CD8-positive, alpha-beta memory T cell (primary cell): ENCODE measurements at regions of chr5 and their contacts with region 1.

Region 1: DNA sequence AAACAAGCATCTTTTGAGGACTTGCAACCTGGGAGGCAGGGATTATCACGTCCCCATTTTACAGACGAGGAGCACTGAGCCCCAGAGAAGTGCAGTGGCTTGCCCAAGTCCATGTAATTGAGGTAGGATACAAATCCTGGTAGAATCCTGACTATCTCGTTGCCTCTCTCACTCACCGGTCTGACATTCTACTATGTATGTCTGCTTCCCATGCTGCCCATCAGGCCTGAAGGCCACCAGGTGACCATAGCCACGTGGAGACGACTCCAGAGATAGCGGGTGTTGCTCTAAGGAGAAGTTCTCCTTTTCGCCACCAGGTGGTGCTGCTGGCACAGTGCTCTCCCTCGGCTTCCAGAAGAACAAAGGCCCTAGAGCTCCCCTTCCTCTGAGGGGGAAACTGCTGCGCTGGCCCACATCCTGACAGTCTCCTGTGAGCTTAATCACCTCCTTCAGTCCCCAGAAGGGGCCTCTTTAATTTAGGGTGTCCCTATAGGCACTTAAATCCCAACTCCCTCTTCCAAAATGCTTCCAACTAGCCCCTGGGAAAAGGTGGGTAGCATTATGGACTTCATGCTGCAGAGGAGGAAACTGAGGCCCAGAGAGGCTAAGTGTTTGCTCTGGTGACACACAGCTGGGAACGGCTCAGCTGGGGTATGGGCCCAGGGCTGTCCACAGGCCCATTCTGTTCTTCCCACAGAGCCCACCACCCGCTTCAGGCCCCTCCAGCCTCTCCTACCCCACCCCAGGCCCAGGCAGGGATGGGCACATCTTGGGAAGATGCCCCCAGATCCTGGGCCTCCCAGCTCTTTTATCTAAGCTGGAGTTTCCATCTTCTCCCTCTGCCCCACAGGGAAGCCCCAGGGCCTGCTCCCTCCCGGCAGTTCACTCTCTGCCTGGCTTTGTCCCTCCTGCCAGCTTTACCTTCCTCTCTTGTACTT is 6.4 kb downstream of the SLC34A1 start:
- DNase-seq: peak; percentile 76 to 90 (median 83)
- H3K4me3 ChIP-seq: no peak overlapping the region
- H3K4me3 Mint-ChIP-seq: peak overlapping the region; percentile 41 to 90 (median 65)
- H3K27ac ChIP-seq: peak overlapping the region; percentile 49
- H3K27ac Mint-ChIP-seq: peak overlapping the region; percentile 75 to 99 (median 93)
- H3K4me1 ChIP-seq: peaks cover 39% of the 10 kb centered on the region
- H3K4me1 Mint-ChIP-seq: peaks cover 35 to 39% (median 36%) of the 10 kb centered on the region in 3 donors
- H3K27me3 ChIP-seq: no peaks in the 10 kb centered on the region
- H3K27me3 Mint-ChIP-seq: no peaks in the 10 kb centered on the region

Region 2: DNA sequence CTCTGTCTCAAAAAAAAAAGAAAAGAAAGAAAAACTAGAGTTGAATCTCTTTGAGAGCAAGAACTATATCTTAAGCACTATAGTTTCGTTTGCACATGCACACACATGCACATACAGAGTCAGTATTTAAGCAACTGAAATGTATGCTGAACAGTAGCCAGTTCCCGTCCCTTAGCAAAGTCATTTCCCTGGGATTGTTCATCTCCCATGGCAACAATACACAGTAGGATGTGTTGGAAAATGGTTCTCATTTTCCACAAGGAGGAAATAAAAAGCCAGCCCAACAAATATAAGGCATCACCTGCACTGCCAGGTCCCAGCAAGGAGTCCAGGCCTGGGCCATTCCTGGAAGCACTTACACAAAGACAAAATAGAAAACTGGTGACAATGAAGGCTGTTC is 372.3 kb before region 1 on chr5:
- CTCF ChIA-PET with region 1: no interaction called
- POLR2A ChIA-PET with region 1: no interaction called
- DNase-seq: no peak
- H3K4me3 ChIP-seq: no peak overlapping the region
- H3K4me3 Mint-ChIP-seq: no peak overlapping the region
- H3K27ac ChIP-seq: no peak overlapping the region
- H3K27ac Mint-ChIP-seq: peak overlapping the region in 1 of 8 donors; percentile 29
- H3K4me1 ChIP-seq: peaks cover 12% of the 10 kb centered on the region
- H3K4me1 Mint-ChIP-seq: peaks cover 15 to 21% (median 20%) of the 10 kb centered on the region in 3 donors
- H3K27me3 ChIP-seq: no peaks in the 10 kb centered on the region
- H3K27me3 Mint-ChIP-seq: peaks cover 0 to 2% of the 10 kb centered on the region in 2 donors

Region 3: GRCh38 chr5:177241768-177242167 is 148.9 kb before region 1 on chr5:
- CTCF ChIA-PET with region 1: no interaction called
- POLR2A ChIA-PET with region 1: no interaction called
- DNase-seq: no peak
- H3K4me3 ChIP-seq: no peak overlapping the region
- H3K4me3 Mint-ChIP-seq: no peak overlapping the region
- H3K27ac ChIP-seq: no peak overlapping the region
- H3K27ac Mint-ChIP-seq: peak overlapping the region in 3 of 8 donors; percentile 36 to 66 (median 58)
- H3K4me1 ChIP-seq: no peaks in the 10 kb centered on the region
- H3K4me1 Mint-ChIP-seq: peaks cover 3 to 5% (median 4%) of the 10 kb centered on the region in 3 donors
- H3K27me3 ChIP-seq: no peaks in the 10 kb centered on the region
- H3K27me3 Mint-ChIP-seq: no peaks in the 10 kb centered on the region

Region 4: DNA sequence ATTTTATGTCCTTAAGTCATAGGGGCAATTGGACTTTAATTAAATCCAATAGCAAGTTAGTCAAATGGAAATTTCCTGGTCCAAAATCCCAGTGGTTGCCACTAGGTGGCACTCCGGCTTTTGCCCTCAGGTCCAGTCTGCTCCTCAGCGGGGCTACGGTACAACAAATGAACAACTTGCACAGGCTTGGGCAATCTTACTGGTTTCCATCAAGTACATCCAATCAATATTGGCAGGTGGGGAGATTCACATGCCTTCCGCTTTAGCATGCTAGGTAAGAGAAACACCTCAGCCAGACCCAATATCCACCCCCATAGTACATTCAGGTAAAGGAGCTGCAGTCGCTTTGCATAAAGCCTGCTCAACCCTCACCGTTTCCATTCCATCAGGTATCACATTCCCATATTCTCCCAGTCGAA is 72.7 kb before region 1 on chr5:
- CTCF ChIA-PET with region 1: interaction called, 19 read pairs
- POLR2A ChIA-PET with region 1: no interaction called
- DNase-seq: peak; percentile 55 to 80 (median 63)
- H3K4me3 ChIP-seq: no peak overlapping the region
- H3K4me3 Mint-ChIP-seq: no peak overlapping the region
- H3K27ac ChIP-seq: no peak overlapping the region
- H3K27ac Mint-ChIP-seq: peak overlapping the region in 3 of 8 donors; percentile 5 to 48 (median 37)
- H3K4me1 ChIP-seq: peaks cover 6% of the 10 kb centered on the region
- H3K4me1 Mint-ChIP-seq: peaks cover 11 to 19% (median 19%) of the 10 kb centered on the region in 3 donors
- H3K27me3 ChIP-seq: no peaks in the 10 kb centered on the region
- H3K27me3 Mint-ChIP-seq: peaks cover 0 to 3% of the 10 kb centered on the region in 2 donors

Region 5: GRCh38 chr5:177362610-177363507 is 27.8 kb before region 1 on chr5:
- CTCF ChIA-PET with region 1: interaction called, 136 read pairs
- POLR2A ChIA-PET with region 1: interaction called, 3 read pairs
- DNase-seq: peak; percentile 59 to 78 (median 70)
- H3K4me3 ChIP-seq: peak overlapping the region; percentile 47
- H3K4me3 Mint-ChIP-seq: peak overlapping the region; percentile 73 to 95 (median 83)
- H3K27ac ChIP-seq: peak overlapping the region; percentile 57
- H3K27ac Mint-ChIP-seq: peak overlapping the region; percentile 75 to 97 (median 90)
- H3K4me1 ChIP-seq: peaks cover 72% of the 10 kb centered on the region
- H3K4me1 Mint-ChIP-seq: peaks cover 60 to 76% (median 64%) of the 10 kb centered on the region in 3 donors
- H3K27me3 ChIP-seq: no peaks in the 10 kb centered on the region
- H3K27me3 Mint-ChIP-seq: peaks cover 0 to 1% of the 10 kb centered on the region in 2 donors

Region 6: DNA sequence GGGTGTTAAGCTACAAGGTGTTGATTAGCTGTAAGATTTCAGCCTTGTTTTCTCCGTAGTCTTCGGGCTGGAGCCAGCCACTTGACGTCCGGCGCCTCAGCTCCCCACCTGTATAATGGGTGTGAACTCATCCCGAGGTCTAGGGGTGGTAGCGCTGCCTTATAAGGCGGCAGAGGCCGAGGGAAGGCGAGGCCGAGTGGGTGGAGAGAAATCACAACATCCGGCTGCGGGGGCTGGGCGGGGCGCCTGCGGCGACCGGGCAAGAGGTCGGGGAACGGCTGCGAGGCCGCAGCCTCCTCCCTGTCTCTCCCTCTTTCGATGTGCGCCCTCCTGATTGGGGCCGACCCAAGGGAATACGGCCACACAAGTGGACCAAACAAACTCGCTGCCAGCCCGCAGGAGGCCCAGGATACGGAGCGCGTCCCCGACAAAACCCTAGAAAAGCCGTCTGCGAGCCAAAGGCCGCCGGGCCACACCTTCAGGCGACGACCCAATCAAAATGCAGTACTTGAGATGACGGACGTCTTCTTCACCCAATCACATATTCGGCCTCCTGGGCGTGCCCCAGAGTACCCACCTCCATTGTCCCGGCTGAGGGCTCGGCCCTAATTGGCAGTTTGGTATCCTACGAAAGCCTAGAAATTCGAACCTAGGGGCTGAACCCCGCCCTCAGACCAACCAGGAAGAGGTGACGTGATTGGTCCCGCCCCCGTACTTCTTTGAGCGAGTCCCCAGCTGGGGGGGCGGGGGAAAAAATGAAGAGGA is 35.4 kb after region 1 on chr5:
- CTCF ChIA-PET with region 1: interaction called, 58 read pairs
- POLR2A ChIA-PET with region 1: interaction called, 10 read pairs
- DNase-seq: peak; percentile 99 to 100 (median 100)
- H3K4me3 ChIP-seq: peak overlapping the region; percentile 93
- H3K4me3 Mint-ChIP-seq: peak overlapping the region; percentile 89 to 96 (median 95)
- H3K27ac ChIP-seq: peak overlapping the region; percentile 90
- H3K27ac Mint-ChIP-seq: peak overlapping the region; percentile 92 to 99 (median 98)
- H3K4me1 ChIP-seq: peaks cover 55% of the 10 kb centered on the region
- H3K4me1 Mint-ChIP-seq: peaks cover 45 to 60% (median 51%) of the 10 kb centered on the region in 3 donors
- H3K27me3 ChIP-seq: no peaks in the 10 kb centered on the region
- H3K27me3 Mint-ChIP-seq: peaks cover 0 to 2% of the 10 kb centered on the region in 2 donors

Region 7: GRCh38 chr5:177473461-177474001 is 82.9 kb after region 1 on chr5 and contains the start of gene DBN1:
- CTCF ChIA-PET with region 1: interaction called, 24 read pairs
- POLR2A ChIA-PET with region 1: interaction called, 3 read pairs
- DNase-seq: no peak
- H3K4me3 ChIP-seq: peak within 1 kb of the TSS; percentile 45
- H3K4me3 Mint-ChIP-seq: peak within 1 kb of the TSS; percentile 80 to 94 (median 84)
- H3K27ac ChIP-seq: peak within 1 kb of the TSS; percentile 47
- H3K27ac Mint-ChIP-seq: peak within 1 kb of the TSS; percentile 3 to 92 (median 76)
- H3K4me1 ChIP-seq: peaks cover 30% of the 10 kb centered on the region
- H3K4me1 Mint-ChIP-seq: peaks cover 34 to 56% (median 36%) of the 10 kb centered on the region in 3 donors
- H3K27me3 ChIP-seq: no peaks in the 10 kb centered on the region
- H3K27me3 Mint-ChIP-seq: peaks cover 0 to under 1% of the 10 kb centered on the region in 2 donors
- total RNA-seq, gene DBN1: 47.9 to 50.5 TPM

Region 8: GRCh38 chr5:177497292-177498033 is 106.8 kb after region 1 on chr5 and contains the start of gene PDLIM7:
- CTCF ChIA-PET with region 1: interaction called, 101 read pairs
- POLR2A ChIA-PET with region 1: interaction called, 13 read pairs
- DNase-seq: peak; percentile 89 to 95 (median 90)
- H3K4me3 ChIP-seq: peak within 1 kb of the TSS; percentile 81
- H3K4me3 Mint-ChIP-seq: peak within 1 kb of the TSS; percentile 69 to 89 (median 86)
- H3K27ac ChIP-seq: peak within 1 kb of the TSS; percentile 69
- H3K27ac Mint-ChIP-seq: peak within 1 kb of the TSS in 7 of 8 donors; percentile 0 to 91 (median 75)
- H3K4me1 ChIP-seq: peaks cover 22% of the 10 kb centered on the region
- H3K4me1 Mint-ChIP-seq: peaks cover 13 to 42% (median 23%) of the 10 kb centered on the region in 3 donors
- H3K27me3 ChIP-seq: no peaks in the 10 kb centered on the region
- H3K27me3 Mint-ChIP-seq: peaks cover 0 to 2% of the 10 kb centered on the region in 2 donors
- total RNA-seq, gene PDLIM7: 28.4 to 30.4 TPM